B cell (primary cell): ENCODE measurements at regions of chr11 and their contacts with region 1.

Region 1: GRCh38 chr11:59429924-59430516 is 3.8 kb upstream of the OR5A2 start:
- DNase-seq: peak; percentile 86
- ATAC-seq: peak; percentile 87
- H3K4me3 ChIP-seq: no peak overlapping the region
- H3K4me3 Mint-ChIP-seq: no peak overlapping the region
- H3K27ac ChIP-seq: no peak overlapping the region
- H3K27ac Mint-ChIP-seq: no peak overlapping the region
- H3K4me1 ChIP-seq: no peaks in the 10 kb centered on the region
- H3K4me1 Mint-ChIP-seq: no peaks in the 10 kb centered on the region
- H3K27me3 ChIP-seq: no peaks in the 10 kb centered on the region
- H3K27me3 Mint-ChIP-seq: peaks cover 12% of the 10 kb centered on the region
- CTCF ChIP-seq: peak; percentile 93

Region 2: GRCh38 chr11:58334708-58335107 is 1095.3 kb before region 1 on chr11:
- CTCF ChIA-PET with region 1: no interaction called
- POLR2A ChIA-PET with region 1: no interaction called
- intact Hi-C with region 1: no loop called
- DNase-seq: no peak
- ATAC-seq: no peak
- H3K4me3 ChIP-seq: no peak overlapping the region
- H3K4me3 Mint-ChIP-seq: no peak overlapping the region
- H3K27ac ChIP-seq: no peak overlapping the region
- H3K27ac Mint-ChIP-seq: no peak overlapping the region
- H3K4me1 ChIP-seq: no peaks in the 10 kb centered on the region
- H3K4me1 Mint-ChIP-seq: no peaks in the 10 kb centered on the region
- H3K27me3 ChIP-seq: peaks cover 0 to 2% (median 0%) of the 10 kb centered on the region in 4 experiments
- H3K27me3 Mint-ChIP-seq: peaks cover 25% of the 10 kb centered on the region
- CTCF ChIP-seq: no peak

Region 3: DNA sequence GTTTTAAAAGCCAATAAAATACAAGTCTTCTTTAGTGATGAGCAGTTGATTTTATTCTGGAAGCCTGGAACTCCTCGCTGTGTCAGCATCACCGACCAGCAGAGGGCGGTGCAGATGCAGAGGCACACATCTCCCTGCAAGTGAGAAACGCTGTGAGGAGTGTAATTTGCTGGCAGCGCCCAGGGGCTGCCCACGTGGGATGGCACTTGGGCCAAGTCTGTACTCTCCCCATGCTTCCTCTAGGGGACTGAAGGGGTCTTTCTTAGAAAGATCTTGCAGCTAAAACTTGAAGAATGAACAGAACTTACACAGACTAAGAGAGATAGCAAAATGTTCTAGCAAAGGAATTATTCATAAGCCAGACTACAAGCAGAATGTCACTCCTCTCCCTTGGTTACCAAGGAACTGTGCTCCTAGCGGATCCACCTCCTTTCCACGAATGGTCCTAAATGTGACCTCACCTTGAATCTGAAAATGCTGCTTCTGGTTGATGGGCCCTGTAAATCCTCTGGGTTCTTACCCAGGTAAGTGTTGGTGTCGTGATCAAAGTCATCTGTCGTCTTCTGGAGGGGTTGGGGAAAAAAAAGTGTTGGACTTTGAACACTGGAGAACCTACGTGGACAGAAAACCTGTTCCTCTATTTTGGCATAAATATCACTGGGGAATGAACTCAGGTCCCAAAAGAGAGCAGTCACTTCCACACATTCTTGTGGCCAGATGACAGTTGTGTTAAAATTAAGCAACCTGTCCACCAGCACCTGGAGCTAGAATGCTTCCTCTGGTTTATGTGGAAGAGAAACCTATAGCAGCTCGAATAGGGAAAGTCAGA is 775.7 kb before region 1 on chr11:
- CTCF ChIA-PET with region 1: interaction called, 4 read pairs
- POLR2A ChIA-PET with region 1: no interaction called
- intact Hi-C with region 1: loop called (anchors 5 kb)
- DNase-seq: peak; percentile 81
- ATAC-seq: peak; percentile 98
- H3K4me3 ChIP-seq: no peak overlapping the region
- H3K4me3 Mint-ChIP-seq: no peak overlapping the region
- H3K27ac ChIP-seq: no peak overlapping the region
- H3K27ac Mint-ChIP-seq: no peak overlapping the region
- H3K4me1 ChIP-seq: peaks cover 0 to 5% of the 10 kb centered on the region in 2 donors
- H3K4me1 Mint-ChIP-seq: peaks cover 4% of the 10 kb centered on the region
- H3K27me3 ChIP-seq: no peaks in the 10 kb centered on the region
- H3K27me3 Mint-ChIP-seq: no peaks in the 10 kb centered on the region
- CTCF ChIP-seq: peak; percentile 93

Region 4: DNA sequence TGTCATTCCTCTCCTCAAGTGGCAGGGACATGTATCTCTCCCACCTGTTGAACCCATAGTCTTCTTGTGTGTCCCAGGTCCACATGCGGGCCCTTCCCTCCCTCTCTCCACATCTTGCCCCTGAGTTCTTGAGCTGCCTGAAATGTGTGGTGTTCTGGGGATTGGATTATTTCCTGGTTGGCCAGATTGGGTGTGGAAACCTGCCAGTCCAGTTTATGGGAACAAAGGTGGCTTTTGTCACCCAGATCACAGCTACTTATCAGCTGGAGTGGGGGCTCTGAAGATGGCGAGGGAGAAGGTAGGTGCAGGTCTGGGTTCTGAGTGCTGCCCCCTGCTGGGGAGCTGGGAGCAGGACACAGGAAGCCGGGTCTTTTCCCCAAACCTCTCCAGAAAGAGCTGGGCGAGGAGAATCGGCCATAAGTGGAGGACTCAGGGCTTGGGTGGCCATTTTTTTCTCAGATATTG is 243.9 kb before region 1 on chr11:
- CTCF ChIA-PET with region 1: interaction called, 18 read pairs
- POLR2A ChIA-PET with region 1: no interaction called
- intact Hi-C with region 1: no loop called
- DNase-seq: peak; percentile 68
- ATAC-seq: peak; percentile 59
- H3K4me3 ChIP-seq: no peak overlapping the region
- H3K4me3 Mint-ChIP-seq: no peak overlapping the region
- H3K27ac ChIP-seq: no peak overlapping the region
- H3K27ac Mint-ChIP-seq: no peak overlapping the region
- H3K4me1 ChIP-seq: peaks cover 0 to 2% of the 10 kb centered on the region in 2 donors
- H3K4me1 Mint-ChIP-seq: peaks cover 20% of the 10 kb centered on the region
- H3K27me3 ChIP-seq: no peaks in the 10 kb centered on the region
- H3K27me3 Mint-ChIP-seq: no peaks in the 10 kb centered on the region
- CTCF ChIP-seq: peak; percentile 69

Region 5: DNA sequence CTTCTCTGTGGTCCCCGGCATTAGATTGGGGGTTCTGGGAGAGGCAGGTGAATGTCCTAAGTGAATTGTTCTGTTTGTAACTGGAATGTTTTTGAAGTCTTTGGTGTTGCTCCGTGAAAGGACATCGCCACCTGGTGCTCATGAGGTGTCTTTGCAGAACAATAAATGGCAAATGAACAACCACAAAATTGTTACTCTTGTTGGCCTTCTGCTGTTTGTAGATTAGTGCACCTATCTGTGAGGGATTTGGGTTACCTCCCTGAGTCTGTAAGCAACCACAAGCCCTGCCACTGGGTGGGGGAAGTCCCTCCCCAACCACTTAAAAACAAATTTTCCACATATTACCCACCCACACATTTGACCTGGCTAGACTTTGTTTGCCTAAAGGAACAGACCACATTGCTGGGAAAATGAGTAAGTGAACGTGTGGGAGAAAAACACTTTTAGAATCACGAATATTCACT is 222.0 kb before region 1 on chr11:
- CTCF ChIA-PET with region 1: interaction called, 17 read pairs
- POLR2A ChIA-PET with region 1: interaction called, 4 read pairs
- intact Hi-C with region 1: loop called (anchors 1 kb)
- DNase-seq: peak; percentile 84
- ATAC-seq: peak; percentile 68
- H3K4me3 ChIP-seq: peak overlapping the region; percentile 49 to 91 (median 73)
- H3K4me3 Mint-ChIP-seq: peak overlapping the region; percentile 95
- H3K27ac ChIP-seq: peak overlapping the region; percentile 64 to 89
- H3K27ac Mint-ChIP-seq: peak overlapping the region; percentile 95
- H3K4me1 ChIP-seq: peaks cover 61 to 68% of the 10 kb centered on the region in 2 donors
- H3K4me1 Mint-ChIP-seq: peaks cover 93% of the 10 kb centered on the region
- H3K27me3 ChIP-seq: no peaks in the 10 kb centered on the region
- H3K27me3 Mint-ChIP-seq: no peaks in the 10 kb centered on the region
- CTCF ChIP-seq: peak; percentile 82

Region 6: GRCh38 chr11:59283825-59284772 is 145.9 kb before region 1 on chr11:
- CTCF ChIA-PET with region 1: interaction called, 14 read pairs
- POLR2A ChIA-PET with region 1: no interaction called
- intact Hi-C with region 1: loop called (anchors 1 kb)
- DNase-seq: peak; percentile 92
- ATAC-seq: peak; percentile 83
- H3K4me3 ChIP-seq: peak overlapping the region in 4 of 5 experiments; percentile 25 to 49 (median 34)
- H3K4me3 Mint-ChIP-seq: peak overlapping the region; percentile 80
- H3K27ac ChIP-seq: peak overlapping the region; percentile 75 to 89
- H3K27ac Mint-ChIP-seq: peak overlapping the region; percentile 91
- H3K4me1 ChIP-seq: peaks cover 30 to 51% of the 10 kb centered on the region in 2 donors
- H3K4me1 Mint-ChIP-seq: peaks cover 63% of the 10 kb centered on the region
- H3K27me3 ChIP-seq: no peaks in the 10 kb centered on the region
- H3K27me3 Mint-ChIP-seq: no peaks in the 10 kb centered on the region
- CTCF ChIP-seq: peak; percentile 89

Region 7: GRCh38 chr11:59510940-59511589 is 81.0 kb after region 1 on chr11 and contains the start of gene OR4D9:
- CTCF ChIA-PET with region 1: no interaction called
- POLR2A ChIA-PET with region 1: no interaction called
- intact Hi-C with region 1: no loop called
- DNase-seq: no peak
- ATAC-seq: no peak
- H3K4me3 ChIP-seq: no peak within 1 kb of the TSS
- H3K4me3 Mint-ChIP-seq: no peak within 1 kb of the TSS
- H3K27ac ChIP-seq: no peak within 1 kb of the TSS
- H3K27ac Mint-ChIP-seq: no peak within 1 kb of the TSS
- H3K4me1 ChIP-seq: peaks cover 3 to 5% of the 10 kb centered on the region in 2 donors
- H3K4me1 Mint-ChIP-seq: peaks cover 2% of the 10 kb centered on the region
- H3K27me3 ChIP-seq: peaks cover 0 to 5% (median 0%) of the 10 kb centered on the region in 4 experiments
- H3K27me3 Mint-ChIP-seq: peaks cover 14% of the 10 kb centered on the region
- CTCF ChIP-seq: no peak
- total RNA-seq, gene OR4D9: not detected in 2 replicates